ENCODE measurements at regions of chr11 and their contacts with region 1.

Region 1: GRCh38 chr11:9757809-9758636 is 94.1 kb downstream of the SWAP70 start:
- DNase-seq: peak; percentile 57
- H3K4me3 ChIP-seq: peak overlapping the region; percentile 41 to 47 (median 43)
- H3K27ac ChIP-seq: peak overlapping the region; percentile 79
- H3K4me1 ChIP-seq: peaks cover 72% of the 10 kb centered on the region
- H3K27me3 ChIP-seq: no peaks in the 10 kb centered on the region
- CTCF ChIP-seq: peak; percentile 42 to 55

Region 2: DNA sequence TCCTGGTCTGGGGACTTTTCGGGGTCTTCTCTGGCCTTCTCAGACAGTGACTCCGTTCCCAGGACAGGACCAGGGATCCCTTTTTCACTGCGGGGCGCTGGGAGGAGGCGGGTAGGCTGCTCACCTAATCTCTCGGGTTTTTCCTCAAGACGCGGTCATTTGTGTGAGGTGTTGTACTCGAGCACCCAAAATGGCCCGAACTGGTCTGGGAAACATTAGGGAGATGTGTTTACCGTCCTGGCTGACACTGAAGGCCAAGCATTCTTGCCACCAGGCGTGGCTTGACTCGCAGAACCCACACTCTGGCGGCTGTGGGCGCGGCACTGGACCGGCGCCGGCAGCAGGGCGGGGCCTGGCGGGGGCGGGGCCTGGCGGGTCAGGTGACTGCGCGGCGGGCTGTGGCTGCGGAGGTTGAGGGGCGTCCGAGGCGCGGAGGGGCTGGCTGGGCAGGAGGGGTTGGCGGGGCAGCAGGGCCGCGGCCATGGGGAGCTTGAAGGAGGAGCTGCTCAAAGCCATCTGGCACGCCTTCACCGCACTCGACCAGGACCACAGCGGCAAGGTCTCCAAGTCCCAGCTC is 94.2 kb before region 1 on chr11 and contains the start of gene SWAP70:
- CTCF ChIA-PET with region 1: no interaction called
- dilution Hi-C with region 1: no loop called
- in situ Hi-C with region 1: no loop called
- intact Hi-C with region 1: loop called (anchors 2 kb)
- DNase-seq: peak; percentile 81
- H3K4me3 ChIP-seq: peak within 1 kb of the TSS; percentile 72 to 95 (median 92)
- H3K27ac ChIP-seq: peak within 1 kb of the TSS; percentile 87
- H3K4me1 ChIP-seq: peaks cover 7% of the 10 kb centered on the region
- H3K27me3 ChIP-seq: no peaks in the 10 kb centered on the region
- CTCF ChIP-seq: peak in 1 of 2 donors; percentile 67
- total RNA-seq, gene SWAP70: 40.4 to 51.2 TPM

Region 3: DNA sequence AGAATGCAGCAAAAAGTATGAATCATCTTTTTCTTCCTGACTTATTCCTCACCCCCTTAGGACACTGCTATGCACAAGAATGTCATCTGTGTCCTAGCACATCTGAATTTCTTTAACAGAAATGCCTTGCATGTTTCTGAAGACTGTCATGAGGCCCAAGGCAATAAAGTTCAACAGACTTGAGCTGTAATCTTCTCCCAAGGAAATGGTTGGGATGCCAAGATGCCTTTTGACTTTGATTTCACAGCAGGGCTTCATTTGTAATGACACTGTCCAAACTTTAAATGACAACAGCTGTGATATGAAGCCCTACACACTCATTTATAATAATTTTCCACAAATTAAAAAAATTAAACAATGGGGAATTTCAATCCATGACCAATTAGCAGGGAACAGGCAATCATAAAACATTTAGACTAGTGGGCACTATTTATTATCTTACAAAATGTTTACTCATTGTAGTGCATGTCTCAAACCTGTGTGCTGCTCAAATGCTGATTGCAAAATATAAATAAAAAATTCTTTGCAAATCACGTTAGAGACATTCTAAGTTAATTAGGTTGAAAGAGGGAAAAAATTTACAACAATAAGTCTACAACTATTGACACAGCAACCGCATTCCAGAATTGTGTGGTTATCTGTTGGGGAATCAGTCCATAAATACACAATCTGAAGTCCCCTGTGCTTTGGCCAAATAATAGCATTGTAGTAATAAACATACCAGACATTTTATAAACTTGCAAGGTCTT is 148.2 kb after region 1 on chr11:
- CTCF ChIA-PET with region 1: no interaction called
- dilution Hi-C with region 1: no loop called
- in situ Hi-C with region 1: no loop called
- intact Hi-C with region 1: loop called (anchors 1 kb)
- DNase-seq: peak; percentile 81
- H3K4me3 ChIP-seq: no peak overlapping the region
- H3K27ac ChIP-seq: peak overlapping the region; percentile 73
- H3K4me1 ChIP-seq: peaks cover 31% of the 10 kb centered on the region
- H3K27me3 ChIP-seq: no peaks in the 10 kb centered on the region
- CTCF ChIP-seq: no peak

Region 4: GRCh38 chr11:10122326-10123197 is 364.5 kb after region 1 on chr11:
- CTCF ChIA-PET with region 1: no interaction called
- dilution Hi-C with region 1: no loop called
- in situ Hi-C with region 1: no loop called
- intact Hi-C with region 1: loop called (anchors 10 kb)
- DNase-seq: peak; percentile 97
- H3K4me3 ChIP-seq: no peak overlapping the region
- H3K27ac ChIP-seq: peak overlapping the region; percentile 98
- H3K4me1 ChIP-seq: peaks cover 7% of the 10 kb centered on the region
- H3K27me3 ChIP-seq: no peaks in the 10 kb centered on the region
- CTCF ChIP-seq: no peak

Region 5: GRCh38 chr11:10314199-10315072 is 556.4 kb after region 1 on chr11:
- CTCF ChIA-PET with region 1: no interaction called
- dilution Hi-C with region 1: no loop called
- in situ Hi-C with region 1: loop called (anchors 10 to 25 kb)
- intact Hi-C with region 1: no loop called
- DNase-seq: peak; percentile 67
- H3K4me3 ChIP-seq: no peak overlapping the region
- H3K27ac ChIP-seq: no peak overlapping the region
- H3K4me1 ChIP-seq: peaks cover 13% of the 10 kb centered on the region
- H3K27me3 ChIP-seq: no peaks in the 10 kb centered on the region
- CTCF ChIP-seq: no peak

Region 6: GRCh38 chr11:10405855-10406592 is 648.0 kb after region 1 on chr11:
- CTCF ChIA-PET with region 1: interaction called, 3 read pairs
- dilution Hi-C with region 1: no loop called
- in situ Hi-C with region 1: no loop called
- intact Hi-C with region 1: loop called (anchors 2 kb)
- DNase-seq: peak; percentile 68
- H3K4me3 ChIP-seq: no peak overlapping the region
- H3K27ac ChIP-seq: peak overlapping the region; percentile 15
- H3K4me1 ChIP-seq: peaks cover 19% of the 10 kb centered on the region
- H3K27me3 ChIP-seq: no peaks in the 10 kb centered on the region
- CTCF ChIP-seq: peak; percentile 77 to 80